ENCODE measurements at regions of chr4 and their contacts with region 1.

Region 1: DNA sequence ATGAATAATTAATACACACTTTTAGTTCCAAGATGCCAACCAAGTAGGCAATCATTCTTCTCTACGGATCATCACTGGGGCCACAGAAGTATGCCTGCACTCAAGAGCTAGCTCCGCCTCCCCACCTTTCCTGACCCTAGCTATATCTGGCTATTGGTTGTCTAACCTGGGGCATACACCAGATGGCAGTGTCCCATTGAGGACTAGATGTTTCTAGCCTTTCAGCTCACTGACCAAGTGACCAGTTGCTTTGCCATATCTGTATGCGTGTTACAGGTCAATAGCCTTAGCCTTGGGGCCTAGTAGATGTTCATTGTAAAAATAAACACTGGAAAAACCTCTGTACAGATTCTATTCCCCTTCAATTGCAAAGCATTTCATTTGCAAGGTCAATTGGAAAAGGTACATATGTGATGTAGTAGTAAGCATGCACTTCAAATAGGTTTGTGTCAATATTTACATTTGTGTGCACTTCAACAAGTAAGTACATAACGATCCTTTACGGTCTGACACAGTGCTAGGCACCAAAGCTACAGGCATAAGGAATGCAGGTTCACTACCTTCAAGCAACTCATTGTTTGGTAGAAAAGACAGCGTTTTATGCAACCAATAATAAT is 521.7 kb downstream of the PPARGC1A start:
- DNase-seq: peak in 1 of 2 donors; percentile 25
- ATAC-seq: peak; percentile 90 to 95 (median 93)
- H3K4me3 ChIP-seq: no peak overlapping the region
- H3K27ac ChIP-seq: peak overlapping the region; percentile 75
- H3K4me1 ChIP-seq: peaks cover 26% of the 10 kb centered on the region
- H3K27me3 ChIP-seq: no peaks in the 10 kb centered on the region
- CTCF ChIP-seq: peak; percentile 66

Region 2: GRCh38 chr4:23584024-23584423 is 215.8 kb after region 1 on chr4:
- intact Hi-C with region 1: loop called in 1 of 2 experiments (anchors 10 kb)
- DNase-seq: no peak
- ATAC-seq: no peak
- H3K4me3 ChIP-seq: peak overlapping the region; percentile 2
- H3K27ac ChIP-seq: peak overlapping the region; percentile 43
- H3K4me1 ChIP-seq: peaks cover 27% of the 10 kb centered on the region
- H3K27me3 ChIP-seq: no peaks in the 10 kb centered on the region
- CTCF ChIP-seq: no peak

Region 3: DNA sequence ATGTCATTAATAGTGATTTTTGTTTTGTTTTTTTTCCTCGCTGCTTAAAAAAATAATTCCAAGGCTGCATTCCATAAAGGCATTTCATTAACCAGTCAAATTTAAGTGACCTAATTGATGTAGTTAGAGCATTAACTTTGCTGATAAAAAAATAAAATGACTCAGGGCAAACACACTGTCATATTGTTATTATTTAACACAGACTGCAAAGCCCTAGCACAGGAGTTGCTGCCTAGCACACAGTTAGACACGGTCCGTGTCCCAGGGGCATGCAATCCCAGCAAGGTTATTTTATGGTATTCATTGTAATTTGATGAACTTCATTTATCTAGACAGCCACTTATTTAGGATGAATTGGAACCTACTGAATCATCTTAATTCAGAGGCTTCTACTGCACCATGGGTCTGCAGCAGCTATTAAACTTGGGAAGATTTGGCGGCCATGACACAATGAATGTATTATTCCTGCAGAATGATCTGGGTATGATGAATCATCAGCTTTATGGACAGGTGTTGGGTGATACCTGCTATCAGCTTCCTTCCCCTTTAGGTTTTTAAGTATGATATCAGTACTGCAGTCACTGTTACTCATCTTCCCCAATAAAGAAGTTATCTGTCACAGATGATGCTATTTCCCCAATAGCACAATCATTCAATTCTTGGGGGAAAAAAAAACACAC is 338.9 kb after region 1 on chr4:
- intact Hi-C with region 1: loop called in 1 of 2 experiments (anchors 10 kb)
- DNase-seq: no peak
- ATAC-seq: no peak
- H3K4me3 ChIP-seq: no peak overlapping the region
- H3K27ac ChIP-seq: no peak overlapping the region
- H3K4me1 ChIP-seq: no peaks in the 10 kb centered on the region
- H3K27me3 ChIP-seq: no peaks in the 10 kb centered on the region
- CTCF ChIP-seq: no peak

Region 4: GRCh38 chr4:23737571-23737970 is 369.4 kb after region 1 on chr4:
- intact Hi-C with region 1: loop called in 1 of 2 experiments (anchors 10 kb)
- DNase-seq: no peak
- ATAC-seq: no peak
- H3K4me3 ChIP-seq: no peak overlapping the region
- H3K27ac ChIP-seq: no peak overlapping the region
- H3K4me1 ChIP-seq: no peaks in the 10 kb centered on the region
- H3K27me3 ChIP-seq: no peaks in the 10 kb centered on the region
- CTCF ChIP-seq: no peak